ENCODE measurements at regions of chr2 and their contacts with region 1.

Region 1: DNA sequence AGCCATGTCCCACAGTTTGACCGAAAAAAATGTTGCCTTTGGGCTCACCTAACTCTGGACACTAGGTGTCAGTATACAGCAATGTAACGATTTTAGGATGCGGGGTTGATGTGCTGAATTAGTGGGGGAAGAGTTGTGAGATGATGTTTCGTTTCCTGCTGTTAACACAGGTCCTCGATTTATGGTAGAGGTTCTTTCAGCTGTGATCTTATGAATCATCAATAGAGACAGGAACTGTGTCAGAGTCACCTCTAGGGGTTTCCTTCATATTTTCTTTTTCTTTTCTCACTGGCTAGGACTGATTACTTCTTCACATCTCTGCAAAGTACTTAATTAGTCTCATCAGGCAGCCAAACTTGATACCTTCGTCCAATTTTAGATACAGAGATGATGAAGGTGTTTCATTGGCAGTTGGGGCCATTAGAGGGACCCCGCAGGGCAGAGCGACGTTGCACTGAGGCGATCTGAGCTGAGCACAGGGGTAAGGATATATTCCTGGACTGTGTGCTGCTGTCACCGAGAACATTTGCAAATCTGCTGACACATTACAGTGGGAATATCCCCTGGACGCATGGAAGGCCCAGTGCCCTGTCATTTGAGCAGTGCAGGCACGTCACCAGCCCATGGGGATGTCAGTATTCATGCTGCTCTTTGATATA is 10.2 kb upstream of the MMADHC start:
- DNase-seq: no peak
- H3K4me3 ChIP-seq: peak overlapping the region; percentile 39
- H3K27ac ChIP-seq: no peak overlapping the region
- H3K4me1 ChIP-seq: peaks cover 5% of the 10 kb centered on the region
- H3K27me3 ChIP-seq: no peaks in the 10 kb centered on the region
- CTCF ChIP-seq: peak; percentile 86

Region 2: DNA sequence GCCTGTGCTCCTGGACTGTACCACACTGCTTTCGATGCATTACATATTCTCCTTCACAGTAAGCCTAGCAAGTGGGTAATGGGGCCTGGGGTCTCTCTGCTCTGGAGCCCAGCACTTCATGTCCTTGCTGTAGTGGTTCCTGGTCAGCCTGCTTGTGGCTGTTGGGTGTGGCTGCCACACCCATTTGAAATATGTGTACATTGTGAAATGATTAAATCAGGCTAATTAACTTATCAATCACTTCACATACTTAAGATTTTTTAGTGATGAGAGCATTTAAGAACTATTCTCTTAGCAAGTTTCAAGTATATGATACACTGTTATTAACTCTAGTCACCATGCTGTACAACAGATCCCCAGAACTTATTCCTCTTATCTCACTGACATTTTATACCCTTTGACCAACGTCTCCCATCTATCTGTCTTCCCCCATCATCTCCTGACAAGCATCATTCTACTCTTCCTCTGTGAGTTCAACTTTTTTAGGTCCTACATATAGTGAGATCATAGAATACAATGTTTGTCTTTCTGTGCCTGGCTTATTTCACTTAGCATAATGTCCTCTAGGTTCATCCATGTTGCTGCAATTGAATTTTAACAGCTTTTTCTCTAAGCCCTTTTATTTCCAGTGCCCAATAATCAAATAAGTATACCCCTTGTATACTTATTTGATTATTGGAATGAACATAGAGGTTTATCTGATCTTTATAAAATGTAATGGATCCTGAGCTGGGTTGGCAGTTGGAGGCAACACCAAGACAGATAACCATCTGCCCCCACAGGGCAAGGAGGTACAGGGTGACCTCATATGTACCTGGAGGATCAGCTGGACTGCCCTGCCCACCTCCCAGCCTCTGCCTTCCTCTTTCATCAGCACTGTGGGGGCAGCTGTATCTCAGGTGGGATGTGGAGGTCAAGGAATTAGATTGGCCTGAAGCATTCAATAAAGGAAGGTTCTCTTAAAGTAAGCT is 175.2 kb before region 1 on chr2:
- intact Hi-C with region 1: no loop called
- DNase-seq: no peak
- H3K4me3 ChIP-seq: no peak overlapping the region
- H3K27ac ChIP-seq: no peak overlapping the region
- H3K4me1 ChIP-seq: no peaks in the 10 kb centered on the region
- H3K27me3 ChIP-seq: peaks cover 4% of the 10 kb centered on the region
- CTCF ChIP-seq: no peak

Region 3: GRCh38 chr2:150487537-150488429 is 890.0 kb after region 1 on chr2 and contains the start of gene RND3:
- intact Hi-C with region 1: loop called (anchors 5 kb)
- DNase-seq: peak; percentile 95
- H3K4me3 ChIP-seq: peak within 1 kb of the TSS; percentile 84
- H3K27ac ChIP-seq: peak within 1 kb of the TSS; percentile 97
- H3K4me1 ChIP-seq: peaks cover 41% of the 10 kb centered on the region
- H3K27me3 ChIP-seq: no peaks in the 10 kb centered on the region
- CTCF ChIP-seq: peak; percentile 89
- total RNA-seq, gene RND3: 26.9 TPM

Region 4: GRCh38 chr2:151051574-151052220 is 1453.9 kb after region 1 on chr2:
- intact Hi-C with region 1: loop called (anchors 10 kb)
- DNase-seq: no peak
- H3K4me3 ChIP-seq: no peak overlapping the region
- H3K27ac ChIP-seq: no peak overlapping the region
- H3K4me1 ChIP-seq: no peaks in the 10 kb centered on the region
- H3K27me3 ChIP-seq: no peaks in the 10 kb centered on the region
- CTCF ChIP-seq: peak; percentile 84

Region 5: GRCh38 chr2:151238527-151239487 is 1641.0 kb after region 1 on chr2:
- intact Hi-C with region 1: loop called (anchors 10 kb)
- DNase-seq: no peak
- H3K4me3 ChIP-seq: no peak overlapping the region
- H3K27ac ChIP-seq: no peak overlapping the region
- H3K4me1 ChIP-seq: peaks cover 5% of the 10 kb centered on the region
- H3K27me3 ChIP-seq: no peaks in the 10 kb centered on the region
- CTCF ChIP-seq: peak; percentile 92

Measured in left ventricle myocardium inferior (tissue), 1 donor.